Transverse colon (tissue), 4 donors: ENCODE measurements at regions of chr7 and their contacts with region 1.

Region 1: GRCh38 chr7:73718905-73719805 is at the start of gene STX1A:
- DNase-seq: peak; percentile 76
- H3K4me3 ChIP-seq: peak within 1 kb of the TSS; percentile 75 to 94 (median 90)
- H3K27ac ChIP-seq: peak within 1 kb of the TSS; percentile 68 to 77 (median 76)
- H3K4me1 ChIP-seq: peaks cover 21 to 61% (median 47%) of the 10 kb centered on the region in 4 donors
- H3K27me3 ChIP-seq: peaks cover 9% of the 10 kb centered on the region
- CTCF ChIP-seq: no peak
- EP300 ChIP-seq: no peak
- POLR2A ChIP-seq: no peak
- total RNA-seq, gene STX1A: 4.1 to 6.0 (median 5.0) TPM

Region 2: DNA sequence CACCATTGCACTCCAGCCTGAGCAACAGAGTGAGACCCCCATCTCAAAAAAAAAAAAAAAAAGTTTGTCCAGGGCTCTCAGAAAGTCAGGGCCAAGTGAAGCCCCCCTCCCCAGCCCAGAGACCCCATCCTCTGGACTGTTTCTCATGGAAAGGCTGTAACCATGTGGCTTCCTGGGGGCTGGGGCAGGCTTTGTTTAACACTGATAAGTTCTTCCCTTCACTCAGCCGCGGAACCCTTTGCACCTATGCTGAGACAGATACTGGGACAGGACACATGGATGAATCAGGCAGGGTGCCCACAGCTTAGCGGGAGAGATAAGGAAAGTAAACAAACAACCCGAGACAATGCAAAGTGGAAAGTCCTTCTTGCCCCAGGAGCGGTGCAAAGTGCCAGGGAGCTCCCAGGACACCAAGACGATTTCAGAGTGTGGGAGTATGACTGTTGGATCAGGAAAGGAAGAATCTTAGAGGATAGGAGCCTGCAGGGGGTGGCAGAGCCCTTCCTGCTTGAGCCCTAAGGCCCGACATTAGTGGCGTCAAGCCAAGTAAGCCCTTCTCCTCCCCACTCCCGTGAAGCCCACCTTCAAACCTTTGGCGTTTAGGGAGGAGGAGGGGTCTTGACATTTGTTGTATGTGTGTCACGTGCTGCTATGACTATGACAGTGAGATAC is 106.4 kb before region 1 on chr7:
- in situ Hi-C with region 1: loop called in 3 of 4 experiments (anchors 5 to 10 kb)
- intact Hi-C with region 1: loop called (anchors 2 kb)
- DNase-seq: peak; percentile 83
- H3K4me3 ChIP-seq: no peak overlapping the region
- H3K27ac ChIP-seq: peak overlapping the region; percentile 10 to 70 (median 40)
- H3K4me1 ChIP-seq: peaks cover 0 to 25% (median 3%) of the 10 kb centered on the region in 4 donors
- H3K27me3 ChIP-seq: peaks cover 27% of the 10 kb centered on the region
- CTCF ChIP-seq: peak in 3 of 5 experiments; percentile 13 to 54 (median 22)
- EP300 ChIP-seq: no peak
- POLR2A ChIP-seq: no peak

Region 3: GRCh38 chr7:73667344-73668102 is 51.6 kb before region 1 on chr7 and contains the start of gene VPS37D:
- in situ Hi-C with region 1: loop called in 1 of 4 experiments (anchors 10 kb)
- intact Hi-C with region 1: no loop called
- DNase-seq: peak; percentile 94
- H3K4me3 ChIP-seq: peak within 1 kb of the TSS; percentile 61 to 67 (median 65)
- H3K27ac ChIP-seq: no peak within 1 kb of the TSS
- H3K4me1 ChIP-seq: peaks cover 3 to 31% (median 20%) of the 10 kb centered on the region in 4 donors
- H3K27me3 ChIP-seq: peaks cover 14% of the 10 kb centered on the region
- CTCF ChIP-seq: peak in 4 of 5 experiments; percentile 51 to 90 (median 72)
- EP300 ChIP-seq: no peak
- POLR2A ChIP-seq: no peak
- total RNA-seq, gene VPS37D: 0.82 to 3.5 TPM in 2 of 4 donors, not detected in the others